Esophagus muscularis mucosa (tissue), 4 donors: ENCODE measurements at regions of chr2 and their contacts with region 1.

Region 1: GRCh38 chr2:207769597-207770486 is at the start of gene FZD5:
- DNase-seq: peak; percentile 97
- H3K4me3 ChIP-seq: peak within 1 kb of the TSS; percentile 69 to 96 (median 82)
- H3K27ac ChIP-seq: peak within 1 kb of the TSS; percentile 81 to 95 (median 85)
- H3K4me1 ChIP-seq: peaks cover 37 to 54% (median 49%) of the 10 kb centered on the region in 4 donors
- H3K27me3 ChIP-seq: no peaks in the 10 kb centered on the region
- CTCF ChIP-seq: peak; percentile 46 to 67 (median 54)
- EP300 ChIP-seq: no peak
- POLR2A ChIP-seq: peak; percentile 31
- total RNA-seq, gene FZD5: 15.7 to 23.7 (median 21.0) TPM

Region 2: DNA sequence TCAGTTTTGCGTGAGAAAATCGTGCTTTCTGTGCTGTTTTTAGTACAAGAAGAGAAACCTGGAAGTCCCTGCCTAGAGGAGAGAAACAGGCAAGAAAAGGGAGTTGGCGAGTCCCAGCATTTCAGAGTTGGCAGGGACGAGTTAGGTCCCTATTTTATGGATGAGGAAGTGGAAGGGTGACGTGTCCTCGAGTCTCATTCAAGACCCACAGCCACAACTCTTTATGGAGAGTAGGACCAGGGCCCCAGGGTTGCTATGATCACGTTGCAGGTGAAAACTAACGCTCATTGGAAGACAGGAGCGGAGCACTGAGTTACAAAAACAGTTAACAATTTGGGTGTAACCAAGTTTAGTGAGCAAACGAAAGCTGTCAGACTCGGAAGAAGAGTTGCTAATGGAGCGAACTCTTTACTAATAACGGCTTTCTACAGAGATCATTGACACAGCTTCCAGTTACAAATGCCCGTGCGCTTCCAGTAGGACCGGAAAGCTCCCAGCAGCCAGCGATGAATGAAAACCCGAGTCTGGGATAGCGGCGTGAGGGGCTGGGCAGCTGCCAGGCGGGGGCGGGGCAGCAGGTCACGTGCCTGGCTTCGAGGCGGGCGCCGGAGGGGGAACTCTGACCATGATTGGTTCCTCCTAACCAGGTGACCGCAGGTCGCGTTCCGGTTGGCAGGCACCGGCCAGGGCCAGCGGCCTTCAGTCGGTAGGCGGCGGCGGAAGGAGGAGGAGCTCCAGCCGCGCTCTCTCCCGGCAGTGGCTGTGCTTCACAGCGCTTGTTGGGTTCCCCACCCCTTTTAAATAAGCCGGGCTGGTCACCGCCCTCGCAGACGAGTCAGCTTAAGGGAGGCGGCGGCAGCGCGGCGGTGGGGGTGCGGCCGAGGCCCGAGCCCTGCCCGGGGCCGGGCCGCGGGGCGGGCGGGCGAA is 58.8 kb before region 1 on chr2 and contains the start of gene CCNYL1:
- intact Hi-C with region 1: loop called (anchors 2 kb)
- DNase-seq: peak; percentile 99
- H3K4me3 ChIP-seq: peak within 1 kb of the TSS; percentile 80 to 98 (median 90)
- H3K27ac ChIP-seq: peak within 1 kb of the TSS; percentile 91 to 97 (median 94)
- H3K4me1 ChIP-seq: peaks cover 9 to 31% (median 29%) of the 10 kb centered on the region in 4 donors
- H3K27me3 ChIP-seq: no peaks in the 10 kb centered on the region
- CTCF ChIP-seq: peak in 1 of 3 experiments; percentile 38
- EP300 ChIP-seq: no peak
- POLR2A ChIP-seq: peak; percentile 53
- total RNA-seq, gene CCNYL1: 13.5 to 17.4 (median 16.2) TPM

Region 3: DNA sequence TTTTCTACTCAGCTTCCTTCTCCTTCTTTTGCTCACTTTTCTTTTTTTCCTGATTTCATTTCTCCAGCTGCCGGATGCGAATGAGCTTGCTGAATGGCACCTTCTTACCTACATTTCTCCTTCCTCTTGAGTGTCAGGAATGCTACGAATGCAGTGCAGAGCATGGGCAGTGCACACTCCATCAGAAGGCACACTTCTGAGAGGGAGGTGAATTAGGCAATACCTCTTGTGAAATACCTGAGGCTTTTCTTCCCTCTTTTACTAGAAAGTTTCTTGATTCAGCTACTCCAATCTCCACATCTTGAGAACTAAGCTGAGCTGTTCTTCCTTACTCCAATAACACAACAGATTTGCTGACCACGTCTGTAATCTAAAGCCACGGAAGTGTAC is 204.4 kb after region 1 on chr2:
- intact Hi-C with region 1: loop called (anchors 5 kb)
- DNase-seq: no peak
- H3K4me3 ChIP-seq: no peak overlapping the region
- H3K27ac ChIP-seq: no peak overlapping the region
- H3K4me1 ChIP-seq: peaks cover 4 to 19% (median 14%) of the 10 kb centered on the region in 4 donors
- H3K27me3 ChIP-seq: no peaks in the 10 kb centered on the region
- CTCF ChIP-seq: no peak
- EP300 ChIP-seq: no peak
- POLR2A ChIP-seq: no peak